CD8-positive, alpha-beta memory T cell (primary cell): ENCODE measurements at regions of chr5 and their contacts with region 1.

Region 1: DNA sequence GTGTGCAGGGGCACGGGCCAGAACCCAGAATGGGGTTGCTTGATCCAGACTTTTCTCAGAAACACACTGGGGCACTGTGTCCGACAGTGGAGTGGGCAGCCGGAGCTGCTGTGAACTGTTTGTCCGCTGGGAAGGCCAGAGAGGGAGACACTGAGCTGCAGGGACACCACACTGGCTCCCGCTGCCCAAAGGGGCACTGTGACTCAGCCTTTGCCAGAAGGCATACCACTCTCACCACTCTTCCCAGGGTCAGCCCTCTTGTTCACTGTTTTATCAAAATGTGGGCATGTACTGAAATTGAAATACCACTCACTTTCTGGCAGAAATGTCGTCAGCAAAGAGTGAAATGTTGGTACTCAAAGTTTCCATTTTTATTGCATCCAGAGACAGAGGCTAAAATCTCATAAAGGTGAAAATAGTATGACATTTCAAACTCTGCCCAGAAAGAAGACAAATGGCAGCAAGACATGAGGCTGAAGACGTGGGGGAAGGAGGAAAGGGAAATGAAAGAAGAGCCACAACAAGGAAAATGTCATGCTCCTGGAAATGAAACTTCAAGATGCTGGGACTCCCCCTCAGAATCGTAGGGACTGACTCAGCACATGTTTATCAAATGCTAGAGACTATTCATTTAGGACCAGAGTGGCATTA is 4.5 kb upstream of the IL7R start:
- DNase-seq: peak in 3 of 5 donors; percentile 57 to 70 (median 68)
- H3K4me3 ChIP-seq: peak overlapping the region; percentile 58
- H3K4me3 Mint-ChIP-seq: peak overlapping the region; percentile 90 to 97 (median 93)
- H3K27ac ChIP-seq: peak overlapping the region; percentile 95
- H3K27ac Mint-ChIP-seq: peak overlapping the region; percentile 94 to 100 (median 100)
- H3K4me1 ChIP-seq: peaks cover 59% of the 10 kb centered on the region
- H3K4me1 Mint-ChIP-seq: peaks cover 70 to 83% (median 72%) of the 10 kb centered on the region in 3 donors
- H3K27me3 ChIP-seq: no peaks in the 10 kb centered on the region
- H3K27me3 Mint-ChIP-seq: peaks cover 0 to 1% of the 10 kb centered on the region in 2 donors

Region 2: GRCh38 chr5:35777358-35778087 is 74.7 kb before region 1 on chr5:
- CTCF ChIA-PET with region 1: interaction called, 77 read pairs
- POLR2A ChIA-PET with region 1: interaction called, 11 read pairs
- DNase-seq: peak; percentile 62 to 78 (median 67)
- H3K4me3 ChIP-seq: no peak overlapping the region
- H3K4me3 Mint-ChIP-seq: peak overlapping the region in 6 of 7 donors; percentile 71 to 86 (median 78)
- H3K27ac ChIP-seq: no peak overlapping the region
- H3K27ac Mint-ChIP-seq: peak overlapping the region; percentile 65 to 99 (median 96)
- H3K4me1 ChIP-seq: peaks cover 44% of the 10 kb centered on the region
- H3K4me1 Mint-ChIP-seq: peaks cover 58 to 84% (median 82%) of the 10 kb centered on the region in 3 donors
- H3K27me3 ChIP-seq: no peaks in the 10 kb centered on the region
- H3K27me3 Mint-ChIP-seq: no peaks in the 10 kb centered on the region

Region 3: GRCh38 chr5:35822511-35822910 is 29.7 kb before region 1 on chr5:
- CTCF ChIA-PET with region 1: interaction called, 165 read pairs
- POLR2A ChIA-PET with region 1: interaction called, 125 read pairs
- DNase-seq: peak in 4 of 5 donors; percentile 8 to 80 (median 65)
- H3K4me3 ChIP-seq: peak overlapping the region; percentile 11
- H3K4me3 Mint-ChIP-seq: peak overlapping the region; percentile 59 to 83 (median 74)
- H3K27ac ChIP-seq: no peak overlapping the region
- H3K27ac Mint-ChIP-seq: peak overlapping the region; percentile 83 to 99 (median 93)
- H3K4me1 ChIP-seq: peaks cover 97% of the 10 kb centered on the region
- H3K4me1 Mint-ChIP-seq: peaks cover 0 to 91% (median 89%) of the 10 kb centered on the region in 3 donors
- H3K27me3 ChIP-seq: no peaks in the 10 kb centered on the region
- H3K27me3 Mint-ChIP-seq: no peaks in the 10 kb centered on the region

Region 4: GRCh38 chr5:35863159-35863558 is 10.9 kb after region 1 on chr5:
- CTCF ChIA-PET with region 1: interaction called, 3 read pairs
- POLR2A ChIA-PET with region 1: interaction called, 10 read pairs
- DNase-seq: no peak
- H3K4me3 ChIP-seq: peak overlapping the region; percentile 93
- H3K4me3 Mint-ChIP-seq: peak overlapping the region; percentile 93 to 99 (median 97)
- H3K27ac ChIP-seq: no peak overlapping the region
- H3K27ac Mint-ChIP-seq: peak overlapping the region; percentile 40 to 99 (median 96)
- H3K4me1 ChIP-seq: peaks cover 49% of the 10 kb centered on the region
- H3K4me1 Mint-ChIP-seq: peaks cover 66 to 84% (median 73%) of the 10 kb centered on the region in 3 donors
- H3K27me3 ChIP-seq: no peaks in the 10 kb centered on the region
- H3K27me3 Mint-ChIP-seq: no peaks in the 10 kb centered on the region

Region 5: GRCh38 chr5:35876921-35877320 is 24.7 kb after region 1 on chr5:
- CTCF ChIA-PET with region 1: interaction called, 15 read pairs
- POLR2A ChIA-PET with region 1: interaction called, 9 read pairs
- DNase-seq: no peak
- H3K4me3 ChIP-seq: no peak overlapping the region
- H3K4me3 Mint-ChIP-seq: peak overlapping the region in 4 of 7 donors; percentile 9 to 57 (median 19)
- H3K27ac ChIP-seq: no peak overlapping the region
- H3K27ac Mint-ChIP-seq: peak overlapping the region; percentile 61 to 91 (median 79)
- H3K4me1 ChIP-seq: peaks cover 62% of the 10 kb centered on the region
- H3K4me1 Mint-ChIP-seq: peaks cover 76 to 96% (median 93%) of the 10 kb centered on the region in 3 donors
- H3K27me3 ChIP-seq: no peaks in the 10 kb centered on the region
- H3K27me3 Mint-ChIP-seq: no peaks in the 10 kb centered on the region

Region 6: GRCh38 chr5:36152324-36153288 is 300.4 kb after region 1 on chr5:
- CTCF ChIA-PET with region 1: no interaction called
- POLR2A ChIA-PET with region 1: no interaction called
- DNase-seq: no peak
- H3K4me3 ChIP-seq: peak overlapping the region; percentile 80
- H3K4me3 Mint-ChIP-seq: peak overlapping the region; percentile 94 to 99 (median 96)
- H3K27ac ChIP-seq: peak overlapping the region; percentile 76
- H3K27ac Mint-ChIP-seq: peak overlapping the region; percentile 73 to 96 (median 94)
- H3K4me1 ChIP-seq: peaks cover 18% of the 10 kb centered on the region
- H3K4me1 Mint-ChIP-seq: peaks cover 54 to 85% (median 82%) of the 10 kb centered on the region in 3 donors
- H3K27me3 ChIP-seq: no peaks in the 10 kb centered on the region
- H3K27me3 Mint-ChIP-seq: no peaks in the 10 kb centered on the region

Region 7: GRCh38 chr5:36373527-36374086 is 521.4 kb after region 1 on chr5:
- CTCF ChIA-PET with region 1: no interaction called
- POLR2A ChIA-PET with region 1: no interaction called
- DNase-seq: no peak
- H3K4me3 ChIP-seq: no peak overlapping the region
- H3K4me3 Mint-ChIP-seq: no peak overlapping the region
- H3K27ac ChIP-seq: no peak overlapping the region
- H3K27ac Mint-ChIP-seq: no peak overlapping the region
- H3K4me1 ChIP-seq: no peaks in the 10 kb centered on the region
- H3K4me1 Mint-ChIP-seq: no peaks in the 10 kb centered on the region
- H3K27me3 ChIP-seq: no peaks in the 10 kb centered on the region
- H3K27me3 Mint-ChIP-seq: peaks cover 4 to 7% of the 10 kb centered on the region in 2 donors